A549 (cell line): ENCODE measurements at regions of chr17 and their contacts with region 1.

Region 1: GRCh38 chr17:48678141-48678971 is 44.0 kb downstream of the PRAC1 start:
- DNase-seq: peak; percentile 74 to 86
- ATAC-seq: peak; percentile 96 to 98
- H3K4me3 ChIP-seq: peak overlapping the region; percentile 3; the same call in 1 of the 3 replicates
- H3K27ac ChIP-seq: peak overlapping the region; percentile 28 to 78
- H3K4me1 ChIP-seq: peaks cover 8% of the 10 kb centered on the region; the same call in 1 of the 3 replicates
- CTCF ChIP-seq: peak; percentile 99
- EP300 ChIP-seq: no peak
- POLR2A ChIP-seq: no peak
- RAD21 ChIP-seq: peak; percentile 91 to 97

Region 2: GRCh38 chr17:48646183-48647102 is 31.9 kb before region 1 on chr17:
- CTCF ChIA-PET with region 1: interaction called, 17 read pairs
- POLR2A ChIA-PET with region 1: no interaction called
- DNase-seq: peak; percentile 64 to 80
- ATAC-seq: peak; percentile 76 to 79
- H3K4me3 ChIP-seq: peak overlapping the region; percentile 74
- H3K27ac ChIP-seq: peak overlapping the region; percentile 92 to 95
- H3K4me1 ChIP-seq: peaks cover 34% of the 10 kb centered on the region
- CTCF ChIP-seq: no peak
- EP300 ChIP-seq: no peak
- POLR2A ChIP-seq: peak; percentile 35
- RAD21 ChIP-seq: no peak

Region 3: DNA sequence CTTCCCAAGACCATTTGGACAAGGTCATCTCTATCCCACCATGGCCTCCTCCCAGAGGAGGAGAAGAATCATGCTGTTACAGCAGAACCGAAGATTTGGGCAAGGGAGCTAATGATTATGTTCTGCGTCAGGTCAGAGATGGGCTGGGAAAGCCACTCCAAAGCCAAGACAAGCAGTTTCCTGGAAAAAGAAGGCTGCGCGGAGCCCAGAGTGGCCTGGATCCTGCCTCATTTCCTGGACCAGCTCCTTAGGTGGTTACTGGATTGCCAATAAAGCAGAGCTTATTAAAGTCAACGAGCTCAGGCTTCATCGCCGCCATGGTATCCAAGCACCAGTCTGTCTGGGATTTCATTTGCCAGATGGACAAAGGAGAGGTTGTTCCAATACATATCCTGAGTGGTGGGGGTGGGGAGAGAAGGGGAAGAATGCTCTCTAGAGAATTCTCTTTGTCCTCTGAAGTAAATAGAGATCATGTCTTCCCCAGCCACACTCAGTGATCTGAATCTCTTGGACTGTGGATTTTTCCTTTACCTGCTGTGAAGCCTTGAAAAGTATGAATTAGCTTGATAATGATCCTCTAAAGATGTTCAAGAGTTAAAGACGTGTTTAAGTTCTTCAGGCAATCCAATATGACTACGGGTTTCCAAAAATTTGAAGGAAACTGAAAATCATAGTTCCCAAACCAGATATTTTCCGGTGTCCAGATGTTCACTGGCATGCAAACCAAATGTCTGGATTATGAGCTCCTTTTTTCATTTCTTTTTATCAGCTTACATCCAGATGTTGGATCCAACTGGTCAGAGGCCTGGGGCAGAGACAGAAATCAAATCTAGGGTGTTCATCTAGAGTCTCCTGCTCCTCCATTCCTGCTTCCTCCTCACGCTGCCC is 26.2 kb after region 1 on chr17:
- CTCF ChIA-PET with region 1: interaction called, 70 read pairs
- POLR2A ChIA-PET with region 1: no interaction called
- DNase-seq: no peak
- ATAC-seq: no peak
- H3K4me3 ChIP-seq: no peak overlapping the region
- H3K27ac ChIP-seq: no peak overlapping the region
- H3K4me1 ChIP-seq: no peaks in the 10 kb centered on the region
- CTCF ChIP-seq: no peak
- EP300 ChIP-seq: no peak
- POLR2A ChIP-seq: no peak
- RAD21 ChIP-seq: no peak

Region 4: GRCh38 chr17:48732688-48733629 is 54.6 kb after region 1 on chr17:
- CTCF ChIA-PET with region 1: interaction called, 204 read pairs
- POLR2A ChIA-PET with region 1: no interaction called
- DNase-seq: no peak
- ATAC-seq: no peak
- H3K4me3 ChIP-seq: no peak overlapping the region
- H3K27ac ChIP-seq: no peak overlapping the region
- H3K4me1 ChIP-seq: peaks cover 8% of the 10 kb centered on the region
- CTCF ChIP-seq: no peak
- EP300 ChIP-seq: no peak
- POLR2A ChIP-seq: no peak
- RAD21 ChIP-seq: no peak

Region 5: GRCh38 chr17:48791128-48792032 is 113.0 kb after region 1 on chr17:
- CTCF ChIA-PET with region 1: interaction called, 565 read pairs
- POLR2A ChIA-PET with region 1: interaction called, 8 read pairs
- DNase-seq: peak; percentile 92 to 94
- ATAC-seq: peak; percentile 77 to 89
- H3K4me3 ChIP-seq: no peak overlapping the region
- H3K27ac ChIP-seq: peak overlapping the region; percentile 68
- H3K4me1 ChIP-seq: peaks cover 49% of the 10 kb centered on the region
- CTCF ChIP-seq: peak; percentile 96
- EP300 ChIP-seq: no peak
- POLR2A ChIP-seq: no peak
- RAD21 ChIP-seq: peak; percentile 96 to 98

Region 6: DNA sequence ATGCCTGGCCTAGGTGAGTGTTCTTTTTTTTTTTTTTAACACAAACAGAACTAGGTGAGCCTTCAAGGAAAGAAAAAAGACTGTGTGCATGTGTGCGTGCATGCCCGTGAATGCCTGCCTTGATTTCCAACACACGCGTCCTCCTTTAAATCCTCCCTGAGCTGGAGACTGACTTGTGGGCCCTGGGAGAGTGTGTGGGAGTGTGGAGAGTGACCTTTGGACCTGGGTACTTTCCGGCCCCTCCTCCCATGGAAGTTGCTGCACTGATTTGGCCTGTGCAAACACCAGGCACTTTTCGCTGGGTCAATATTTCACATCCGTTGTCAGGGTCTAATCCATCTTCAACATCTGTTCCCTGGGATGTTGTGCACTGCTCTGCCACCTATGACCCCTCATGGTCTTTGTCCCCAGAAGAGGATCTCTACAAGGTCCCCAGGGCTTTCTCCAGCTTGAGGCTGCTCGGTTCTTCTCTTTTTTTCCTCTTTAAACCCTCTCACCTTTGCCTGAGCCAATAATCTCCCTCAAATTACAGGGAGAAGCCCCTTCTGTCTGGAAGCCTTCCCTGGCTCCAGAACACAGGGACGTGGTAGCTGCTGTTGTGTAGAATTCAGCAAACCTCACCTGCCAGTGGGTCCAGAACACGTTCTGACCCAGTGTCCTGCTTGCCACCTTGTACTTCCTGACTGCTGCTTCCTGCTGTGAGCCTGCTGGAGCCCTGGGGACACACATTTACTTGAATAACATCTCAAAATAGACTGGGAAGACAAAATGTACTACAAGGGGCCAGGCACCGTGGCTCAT is 193.4 kb after region 1 on chr17:
- CTCF ChIA-PET with region 1: interaction called, 368 read pairs
- POLR2A ChIA-PET with region 1: no interaction called
- DNase-seq: peak; percentile 85 to 93
- ATAC-seq: peak; percentile 88 to 94
- H3K4me3 ChIP-seq: no peak overlapping the region
- H3K27ac ChIP-seq: peak overlapping the region; percentile 90 to 94
- H3K4me1 ChIP-seq: peaks cover 58% of the 10 kb centered on the region
- CTCF ChIP-seq: no peak
- EP300 ChIP-seq: no peak; a peak in 1 of 5 replicates
- POLR2A ChIP-seq: no peak
- RAD21 ChIP-seq: peak; percentile 28 to 30; a peak in 2 of 5 replicates